ENCODE measurements at regions of chr3 and their contacts with region 1.

Region 1: GRCh38 chr3:128969993-128970739 is 23.7 kb downstream of the CFAP92 start:
- DNase-seq: peak; percentile 72
- H3K4me3 Mint-ChIP-seq: no peak overlapping the region
- H3K27ac Mint-ChIP-seq: no peak overlapping the region
- H3K4me1 Mint-ChIP-seq: peaks cover 3% of the 10 kb centered on the region
- H3K27me3 Mint-ChIP-seq: no peaks in the 10 kb centered on the region

Region 2: DNA sequence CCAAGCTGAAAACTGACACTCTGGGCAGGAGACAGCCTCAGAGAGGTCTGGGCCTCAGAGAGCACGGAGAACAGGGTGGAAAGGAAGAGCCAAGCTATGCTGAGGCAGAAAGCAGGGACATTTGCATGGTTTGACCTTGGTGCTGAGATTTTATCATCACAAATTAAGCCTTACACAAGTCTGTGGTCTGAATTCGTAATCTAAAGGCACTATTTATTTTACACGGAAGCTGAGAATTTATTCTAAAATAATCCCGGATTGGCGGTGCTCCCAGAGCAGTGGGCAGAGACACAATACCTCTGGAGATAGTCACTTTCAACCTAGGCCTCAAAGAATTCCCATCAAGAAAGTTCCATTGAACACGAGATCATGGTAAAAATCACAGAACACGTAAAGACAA is 23.8 kb before region 1 on chr3:
- CTCF ChIA-PET with region 1: interaction called, 11 read pairs
- POLR2A ChIA-PET with region 1: no interaction called
- intact Hi-C with region 1: no loop called
- DNase-seq: no peak
- H3K4me3 Mint-ChIP-seq: no peak overlapping the region
- H3K27ac Mint-ChIP-seq: no peak overlapping the region
- H3K4me1 Mint-ChIP-seq: no peaks in the 10 kb centered on the region
- H3K27me3 Mint-ChIP-seq: peaks cover 1% of the 10 kb centered on the region

Region 3: DNA sequence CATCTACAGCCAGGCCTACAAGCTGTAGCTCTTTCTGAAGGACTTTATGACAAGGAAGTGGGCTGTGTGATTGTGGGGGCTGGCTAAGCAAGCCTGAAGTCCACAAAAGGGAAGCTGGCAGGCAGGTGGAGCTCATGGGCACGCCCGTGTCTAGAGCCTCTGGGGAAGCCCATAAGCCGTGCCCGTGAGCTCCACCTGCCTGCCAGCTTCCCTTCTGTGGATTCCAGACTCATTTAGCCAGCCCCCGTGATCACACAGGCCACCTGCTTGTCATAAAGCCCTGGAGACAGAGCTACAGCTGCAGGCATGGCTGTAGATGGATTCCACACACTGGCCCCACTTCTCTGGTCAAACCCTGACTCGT is 46.2 kb after region 1 on chr3:
- CTCF ChIA-PET with region 1: interaction called, 91 read pairs
- POLR2A ChIA-PET with region 1: no interaction called
- intact Hi-C with region 1: loop called (anchors 1 kb)
- DNase-seq: peak; percentile 80
- H3K4me3 Mint-ChIP-seq: peak overlapping the region; percentile 62
- H3K27ac Mint-ChIP-seq: peak overlapping the region; percentile 93
- H3K4me1 Mint-ChIP-seq: peaks cover 34% of the 10 kb centered on the region
- H3K27me3 Mint-ChIP-seq: no peaks in the 10 kb centered on the region

Region 4: DNA sequence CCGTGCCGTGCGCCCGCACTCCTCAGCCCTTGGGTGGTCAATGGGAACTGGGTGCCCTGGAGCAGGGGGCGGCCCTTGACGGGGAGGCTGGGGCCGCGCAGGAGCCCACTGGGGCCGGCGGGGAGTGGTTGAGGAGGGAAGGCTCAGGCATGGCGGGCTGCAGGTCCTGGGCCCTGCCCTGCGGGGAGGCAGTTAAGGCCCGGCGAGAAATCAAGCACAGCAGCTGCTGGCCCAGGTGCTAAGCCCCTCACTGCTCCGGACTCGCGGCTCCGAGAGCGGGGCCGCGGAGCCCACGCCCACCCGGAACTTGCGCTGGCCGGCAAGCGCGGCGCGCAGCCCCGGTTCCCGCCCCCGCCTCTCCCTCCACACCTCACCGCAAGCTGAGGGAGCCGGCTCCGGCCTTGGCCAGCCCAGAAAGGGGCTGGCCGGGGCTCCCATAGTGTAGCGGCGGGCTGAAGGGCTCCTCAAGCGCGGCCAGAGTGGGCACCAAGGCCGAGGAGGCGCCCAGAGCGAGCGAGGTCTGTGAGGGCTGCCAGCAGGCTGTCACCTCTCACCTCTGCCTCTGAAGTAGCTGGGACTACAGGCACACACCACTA is 98.2 kb after region 1 on chr3:
- CTCF ChIA-PET with region 1: interaction called, 18 read pairs
- POLR2A ChIA-PET with region 1: no interaction called
- intact Hi-C with region 1: no loop called
- DNase-seq: peak; percentile 30
- H3K4me3 Mint-ChIP-seq: peak overlapping the region; percentile 29
- H3K27ac Mint-ChIP-seq: no peak overlapping the region
- H3K4me1 Mint-ChIP-seq: peaks cover 7% of the 10 kb centered on the region
- H3K27me3 Mint-ChIP-seq: peaks cover 5% of the 10 kb centered on the region

Region 5: GRCh38 chr3:129224984-129225393 is 254.8 kb after region 1 on chr3:
- CTCF ChIA-PET with region 1: interaction called, 11 read pairs
- POLR2A ChIA-PET with region 1: no interaction called
- intact Hi-C with region 1: no loop called
- DNase-seq: peak; percentile 38
- H3K4me3 Mint-ChIP-seq: peak overlapping the region; percentile 49
- H3K27ac Mint-ChIP-seq: peak overlapping the region; percentile 55
- H3K4me1 Mint-ChIP-seq: peaks cover 16% of the 10 kb centered on the region
- H3K27me3 Mint-ChIP-seq: no peaks in the 10 kb centered on the region

Region 6: GRCh38 chr3:129316131-129317013 is 346.2 kb after region 1 on chr3:
- CTCF ChIA-PET with region 1: interaction called, 27 read pairs
- POLR2A ChIA-PET with region 1: no interaction called
- intact Hi-C with region 1: no loop called
- DNase-seq: peak; percentile 90
- H3K4me3 Mint-ChIP-seq: peak overlapping the region; percentile 93
- H3K27ac Mint-ChIP-seq: peak overlapping the region; percentile 89
- H3K4me1 Mint-ChIP-seq: peaks cover 26% of the 10 kb centered on the region
- H3K27me3 Mint-ChIP-seq: no peaks in the 10 kb centered on the region

Region 7: DNA sequence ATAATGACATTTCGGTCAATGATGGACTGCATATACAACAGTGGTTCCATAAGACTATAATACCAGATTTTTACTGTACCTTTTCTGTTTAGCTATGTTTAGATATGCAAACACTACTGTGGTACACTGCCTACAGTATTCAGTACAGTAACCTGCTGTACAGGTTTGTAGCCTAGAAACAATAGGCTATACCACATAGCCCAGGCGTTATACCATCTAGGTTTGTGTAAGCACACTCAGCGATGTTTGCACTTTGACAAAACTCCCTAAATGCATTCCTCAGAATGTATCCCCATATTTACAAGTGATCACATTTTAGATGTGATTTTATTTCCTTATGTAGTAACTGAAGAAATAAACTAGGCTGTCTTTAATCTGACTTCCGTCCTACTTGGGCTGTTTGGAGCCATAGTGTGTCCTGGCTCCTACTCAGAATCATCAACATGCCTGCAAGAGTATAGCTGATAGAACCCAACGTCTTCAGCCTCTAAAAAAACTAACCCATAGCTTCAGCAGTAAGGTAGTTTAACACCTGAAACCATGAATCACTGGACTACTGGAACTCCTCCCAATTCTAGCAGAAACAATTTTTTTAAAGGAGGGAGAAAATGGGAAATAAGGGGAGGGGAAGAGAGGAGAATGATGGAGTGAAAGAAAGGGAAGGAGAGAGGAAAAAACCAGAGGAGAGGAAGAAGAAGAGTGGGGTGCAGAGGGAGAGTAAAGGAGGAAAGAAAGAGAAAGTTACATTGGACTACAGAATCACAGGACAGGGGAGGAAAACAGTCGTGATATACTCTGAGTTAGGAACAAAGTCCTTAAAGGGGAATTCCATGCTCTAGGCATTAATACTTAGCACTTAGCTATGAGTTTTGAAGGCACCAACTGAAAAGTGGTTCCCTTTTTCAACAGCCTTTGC is 704.0 kb after region 1 on chr3:
- CTCF ChIA-PET with region 1: no interaction called
- POLR2A ChIA-PET with region 1: no interaction called
- intact Hi-C with region 1: no loop called
- DNase-seq: no peak
- H3K4me3 Mint-ChIP-seq: no peak overlapping the region
- H3K27ac Mint-ChIP-seq: no peak overlapping the region
- H3K4me1 Mint-ChIP-seq: no peaks in the 10 kb centered on the region
- H3K27me3 Mint-ChIP-seq: no peaks in the 10 kb centered on the region

Measured in activated CD4-positive, alpha-beta memory T cell treated with anti-CD3 and anti-CD28 coated beads for 36 hours (primary cell).